MCF 10A (cell line): ENCODE measurements at regions of chr11 and their contacts with region 1.

Region 1: DNA sequence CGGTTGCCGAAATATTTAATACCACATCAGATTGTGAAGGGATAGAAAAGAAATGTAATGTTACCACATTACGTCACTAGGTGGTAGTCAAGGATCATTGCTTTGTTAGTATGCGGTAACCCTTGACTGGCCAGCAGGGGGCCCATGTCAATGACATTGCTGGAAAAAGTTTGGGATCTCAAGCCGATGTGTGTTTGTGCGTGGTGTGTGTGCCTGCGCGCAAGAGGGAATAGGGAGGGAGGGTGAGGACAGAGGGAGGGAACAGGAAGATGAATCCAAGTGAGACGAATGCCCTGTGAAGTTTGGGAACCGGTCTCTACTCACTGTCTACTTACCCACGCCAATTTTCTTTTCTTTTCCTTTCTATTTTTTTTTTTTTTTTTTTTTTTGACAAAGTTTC is 10.7 kb upstream of the MRGPRX2 start:
- DNase-seq: peak; percentile 90
- H3K4me3 Mint-ChIP-seq: peak overlapping the region; percentile 26
- H3K27ac Mint-ChIP-seq: no peak overlapping the region
- H3K4me1 Mint-ChIP-seq: no peaks in the 10 kb centered on the region
- H3K27me3 Mint-ChIP-seq: peaks cover 54% of the 10 kb centered on the region
- CTCF ChIP-seq: peak; percentile 98

Region 2: DNA sequence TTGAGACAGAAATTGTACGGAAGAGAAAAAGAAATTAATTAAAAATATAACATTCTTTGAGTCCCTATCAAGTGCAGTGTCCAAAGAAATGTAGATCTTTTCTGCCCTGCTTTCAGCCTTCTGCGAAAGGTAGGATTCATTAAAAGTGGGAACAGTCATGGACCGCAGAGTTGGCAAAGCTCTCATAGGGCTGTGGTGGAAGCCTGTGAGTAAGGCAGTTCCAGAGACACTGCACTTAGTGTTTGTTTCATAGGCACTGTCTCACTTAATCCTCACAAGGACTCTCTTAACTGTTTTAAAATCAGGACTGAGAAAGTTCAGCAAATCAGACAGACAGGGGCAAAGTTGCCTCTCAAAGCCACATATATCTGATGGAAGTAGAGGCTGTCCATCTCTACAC is 16.2 kb before region 1 on chr11:
- CTCF ChIA-PET with region 1: interaction called, 29 read pairs
- POLR2A ChIA-PET with region 1: no interaction called
- intact Hi-C with region 1: no loop called
- DNase-seq: no peak
- H3K4me3 Mint-ChIP-seq: no peak overlapping the region
- H3K27ac Mint-ChIP-seq: no peak overlapping the region
- H3K4me1 Mint-ChIP-seq: no peaks in the 10 kb centered on the region
- H3K27me3 Mint-ChIP-seq: peaks cover 92% of the 10 kb centered on the region
- CTCF ChIP-seq: no peak

Region 3: GRCh38 chr11:19116971-19117750 is 45.9 kb after region 1 on chr11 and contains the start of gene ZDHHC13:
- CTCF ChIA-PET with region 1: interaction called, 27 read pairs
- POLR2A ChIA-PET with region 1: no interaction called
- intact Hi-C with region 1: loop called (anchors 1 kb)
- DNase-seq: peak; percentile 94
- H3K4me3 Mint-ChIP-seq: peak within 1 kb of the TSS; percentile 82
- H3K27ac Mint-ChIP-seq: peak within 1 kb of the TSS; percentile 69
- H3K4me1 Mint-ChIP-seq: peaks cover 16% of the 10 kb centered on the region
- H3K27me3 Mint-ChIP-seq: peaks cover 19% of the 10 kb centered on the region
- CTCF ChIP-seq: peak; percentile 34
- total RNA-seq, gene ZDHHC13: 8.3 and 12.2 TPM in 2 replicates

Region 4: DNA sequence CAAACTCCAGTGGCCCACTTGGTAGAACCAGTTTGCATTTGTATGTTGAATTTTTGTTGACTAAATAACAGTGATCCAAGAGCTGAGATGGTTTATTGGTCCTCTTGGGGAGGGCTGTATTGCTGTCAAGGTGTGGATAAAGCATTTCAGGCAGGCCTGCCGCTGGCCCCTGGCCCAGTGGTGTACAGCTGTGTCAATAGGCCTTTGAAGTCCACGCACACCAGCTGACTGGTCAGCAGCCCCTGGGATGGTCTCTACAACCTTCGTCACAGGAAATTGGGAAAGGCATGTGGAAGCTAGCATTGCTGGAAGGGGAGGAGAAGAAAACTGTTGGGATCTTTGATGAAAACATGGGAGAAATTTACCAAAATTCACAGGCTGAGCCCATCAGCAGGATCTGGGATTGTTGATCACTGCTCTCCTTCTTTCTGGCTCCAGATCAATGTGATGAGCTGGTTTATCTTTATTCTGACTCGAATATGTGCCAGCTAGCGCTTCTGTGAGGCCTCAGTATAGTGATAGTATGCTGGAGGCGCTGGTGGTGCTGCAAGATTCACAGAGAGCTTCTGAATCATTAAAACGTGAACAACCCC is 182.0 kb after region 1 on chr11:
- CTCF ChIA-PET with region 1: interaction called, 41 read pairs
- POLR2A ChIA-PET with region 1: no interaction called
- intact Hi-C with region 1: no loop called
- DNase-seq: no peak
- H3K4me3 Mint-ChIP-seq: no peak overlapping the region
- H3K27ac Mint-ChIP-seq: no peak overlapping the region
- H3K4me1 Mint-ChIP-seq: no peaks in the 10 kb centered on the region
- H3K27me3 Mint-ChIP-seq: no peaks in the 10 kb centered on the region
- CTCF ChIP-seq: no peak

Region 5: GRCh38 chr11:19311308-19312030 is 240.2 kb after region 1 on chr11:
- CTCF ChIA-PET with region 1: interaction called, 8 read pairs
- POLR2A ChIA-PET with region 1: no interaction called
- intact Hi-C with region 1: loop called (anchors 1 kb)
- DNase-seq: peak; percentile 71
- H3K4me3 Mint-ChIP-seq: no peak overlapping the region
- H3K27ac Mint-ChIP-seq: no peak overlapping the region
- H3K4me1 Mint-ChIP-seq: peaks cover 5% of the 10 kb centered on the region
- H3K27me3 Mint-ChIP-seq: no peaks in the 10 kb centered on the region
- CTCF ChIP-seq: peak; percentile 59

Region 6: DNA sequence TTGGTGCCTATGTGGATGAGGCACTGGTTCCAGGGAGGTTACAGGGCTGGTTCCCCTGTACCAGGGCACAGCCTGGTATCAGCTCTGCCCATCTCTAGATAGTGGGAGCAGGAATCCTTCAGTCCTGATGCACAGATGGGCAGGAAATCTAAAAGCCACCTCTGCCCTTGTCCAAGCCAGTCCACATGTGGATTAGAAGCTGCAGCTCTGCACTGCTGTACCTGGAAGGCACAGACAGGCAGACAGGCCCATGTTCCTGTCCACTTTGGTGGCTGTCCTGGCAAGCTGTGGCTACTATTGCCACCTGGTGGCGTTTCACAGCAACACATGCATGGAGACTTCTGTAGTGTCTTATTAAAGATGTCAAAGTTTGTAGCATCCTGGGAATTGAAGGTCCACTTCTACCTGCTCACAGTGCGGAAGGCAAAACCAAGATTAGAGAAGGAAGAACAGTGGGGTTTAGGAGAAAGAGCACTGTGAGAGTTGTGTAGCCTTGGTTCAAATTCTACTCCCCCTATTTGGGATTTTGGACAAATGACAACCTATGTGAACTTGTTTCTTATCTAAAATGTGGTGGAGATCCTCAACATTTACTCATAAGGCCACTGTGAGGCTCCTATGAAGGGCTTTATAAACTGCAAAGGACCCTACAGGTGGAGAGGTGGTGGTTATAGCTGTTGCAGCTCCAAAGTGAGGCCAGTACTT is 671.5 kb after region 1 on chr11:
- CTCF ChIA-PET with region 1: interaction called, 5 read pairs
- POLR2A ChIA-PET with region 1: no interaction called
- intact Hi-C with region 1: loop called (anchors 10 kb)
- DNase-seq: peak; percentile 78
- H3K4me3 Mint-ChIP-seq: no peak overlapping the region
- H3K27ac Mint-ChIP-seq: no peak overlapping the region
- H3K4me1 Mint-ChIP-seq: peaks cover 15% of the 10 kb centered on the region
- H3K27me3 Mint-ChIP-seq: no peaks in the 10 kb centered on the region
- CTCF ChIP-seq: peak; percentile 89